ENCODE measurements at regions of chr17 and their contacts with region 1.

Region 1: DNA sequence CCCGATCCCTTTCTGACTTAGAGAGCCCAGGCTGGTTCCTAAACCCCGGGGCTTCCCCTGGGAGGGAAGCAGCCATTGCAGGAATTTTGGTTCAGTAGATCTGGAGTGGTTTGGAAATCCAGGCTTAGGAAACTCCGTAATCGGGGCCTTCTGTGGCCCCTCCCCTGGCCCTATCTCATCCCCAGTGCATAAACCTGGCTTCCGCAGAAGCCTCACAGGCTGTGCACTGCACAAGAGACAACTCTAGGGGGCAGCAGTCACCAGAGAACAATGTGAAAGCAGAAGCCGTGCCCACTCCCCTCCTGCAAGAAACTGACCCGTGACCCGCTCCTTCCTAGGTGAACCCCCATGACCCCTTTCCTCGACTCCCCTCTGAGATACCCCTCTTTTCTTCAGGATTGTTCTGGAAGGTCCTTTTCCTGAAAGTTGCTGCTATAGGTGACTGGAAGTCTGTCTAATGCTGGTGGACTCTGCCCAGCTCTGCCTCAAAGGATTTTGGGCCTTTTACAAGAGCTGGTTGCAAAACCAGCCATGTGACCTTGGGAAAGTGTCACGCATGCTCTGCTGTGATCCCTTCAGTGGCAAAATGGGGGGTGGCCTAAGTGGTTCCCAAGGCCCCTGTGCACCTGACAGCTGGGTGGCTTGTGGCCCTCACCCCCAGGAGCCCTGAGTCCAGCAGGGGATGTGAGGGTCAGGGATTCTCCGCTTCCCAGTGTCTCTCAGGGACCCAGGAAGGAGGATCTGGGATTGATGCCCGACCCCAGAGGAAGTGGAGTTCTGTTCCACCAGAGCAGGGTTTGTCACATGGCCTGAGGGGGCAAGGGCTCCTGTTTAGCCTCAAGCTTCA is 14.4 kb downstream of the GUCY2D start:
- DNase-seq: no peak
- ATAC-seq: peak; percentile 87
- H3K4me3 ChIP-seq: peak overlapping the region; percentile 50 to 65
- H3K27ac ChIP-seq: peak overlapping the region; percentile 48; the same call in 1 of the 2 replicates
- H3K4me1 ChIP-seq: peaks cover 8 to 45% of the 10 kb centered on the region in 2 experiments; a peak in 3 of 4 replicates
- H3K27me3 ChIP-seq: no peaks in the 10 kb centered on the region
- CTCF ChIP-seq: peak; percentile 74 to 88 (median 86)
- POLR2A ChIP-seq: no peak
- RAD21 ChIP-seq: peak; percentile 80

Region 2: GRCh38 chr17:7997186-7997585 is 19.7 kb before region 1 on chr17:
- CTCF ChIA-PET with region 1: interaction called, 12 read pairs
- POLR2A ChIA-PET with region 1: no interaction called
- RAD21 ChIA-PET with region 1: no interaction called
- intact Hi-C with region 1: no loop called
- DNase-seq: peak; percentile 67
- ATAC-seq: peak; percentile 97
- H3K4me3 ChIP-seq: peak overlapping the region in 1 of 2 experiments; percentile 27; a peak in 1 of 4 replicates
- H3K27ac ChIP-seq: peak overlapping the region; percentile 49
- H3K4me1 ChIP-seq: peaks cover 13 to 22% of the 10 kb centered on the region in 2 experiments
- H3K27me3 ChIP-seq: no peaks in the 10 kb centered on the region
- CTCF ChIP-seq: peak; percentile 61 to 87 (median 66)
- POLR2A ChIP-seq: no peak
- RAD21 ChIP-seq: peak; percentile 62

Region 3: DNA sequence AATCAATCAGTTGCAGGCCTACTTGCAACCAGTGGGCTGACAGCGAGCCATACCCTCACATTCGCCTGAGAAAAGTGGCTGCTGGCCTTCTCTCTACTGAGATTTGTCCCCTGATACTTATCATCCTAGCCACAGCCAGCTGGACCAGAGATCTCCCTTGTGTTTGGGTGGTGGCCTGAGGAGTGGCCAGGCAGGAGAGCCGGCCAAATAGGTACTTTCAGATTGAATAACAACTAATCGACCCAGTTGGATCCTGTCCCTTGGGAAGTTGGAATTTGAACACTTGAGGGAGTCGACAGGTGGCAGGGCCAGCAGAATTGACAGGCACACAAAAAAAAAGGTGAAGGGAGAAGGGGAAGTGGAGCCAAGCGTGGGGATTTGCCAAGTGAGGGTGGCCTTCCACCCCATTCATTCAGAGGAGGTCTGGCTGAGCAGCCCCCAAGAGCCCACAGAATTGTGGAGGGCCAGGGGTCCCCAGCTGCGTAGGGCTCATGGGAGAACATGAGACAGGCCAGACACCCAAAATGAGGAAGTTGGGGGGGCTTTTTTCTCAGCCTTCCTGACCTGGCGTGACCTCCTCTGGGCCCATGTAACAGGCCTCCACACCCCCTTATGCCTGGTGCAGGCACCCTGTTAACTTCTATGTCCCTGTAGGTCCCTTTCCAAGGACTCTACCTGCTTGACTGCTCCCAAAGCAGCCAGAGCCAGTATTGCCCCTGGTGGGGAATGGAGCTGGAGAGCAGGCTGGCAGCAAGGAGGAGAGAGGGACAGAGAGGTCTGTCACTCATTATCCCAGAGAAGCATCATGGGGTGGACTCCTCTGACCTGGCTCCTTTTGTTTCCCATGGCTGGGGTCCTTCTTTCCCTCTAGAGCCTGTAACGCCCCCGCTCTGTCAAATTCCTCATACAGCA is 268.7 kb after region 1 on chr17:
- CTCF ChIA-PET with region 1: no interaction called
- POLR2A ChIA-PET with region 1: no interaction called
- RAD21 ChIA-PET with region 1: no interaction called
- intact Hi-C with region 1: no loop called
- DNase-seq: no peak
- ATAC-seq: no peak
- H3K4me3 ChIP-seq: no peak overlapping the region
- H3K27ac ChIP-seq: no peak overlapping the region
- H3K4me1 ChIP-seq: peaks cover 17 to 34% of the 10 kb centered on the region in 2 experiments
- H3K27me3 ChIP-seq: no peaks in the 10 kb centered on the region
- CTCF ChIP-seq: no peak
- POLR2A ChIP-seq: no peak
- RAD21 ChIP-seq: no peak